PC-3 (cell line): ENCODE measurements at regions of chr1 and their contacts with region 1.

Region 1: DNA sequence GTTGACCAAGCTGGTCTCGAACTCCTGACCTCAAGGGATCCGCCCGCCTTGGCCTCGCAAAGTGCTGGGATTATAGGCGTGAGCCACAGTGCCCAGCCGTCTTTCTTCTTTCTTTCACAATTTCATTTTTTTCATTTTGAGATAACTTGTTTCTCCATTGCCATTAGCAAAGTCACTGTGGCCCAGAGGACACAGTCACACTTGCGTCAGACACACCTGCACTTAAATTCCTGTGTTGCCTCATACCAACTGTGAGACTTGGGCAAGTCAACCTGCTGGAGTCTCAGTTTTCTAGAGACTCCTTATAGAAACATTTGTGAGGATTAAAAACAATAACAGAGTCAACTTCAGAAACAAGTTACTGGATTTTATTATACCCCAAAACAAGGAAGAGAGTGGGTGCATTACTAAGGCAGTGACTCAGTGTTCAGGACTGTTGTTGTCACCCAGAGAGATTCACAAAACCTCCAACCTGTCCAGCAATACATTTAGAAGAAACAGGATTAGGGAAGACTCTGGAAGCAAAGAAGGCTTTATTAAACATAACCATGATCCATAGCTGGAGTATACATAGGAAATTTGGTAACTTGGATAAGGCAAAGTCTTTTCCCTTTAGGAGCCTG is 2.6 kb downstream of the TEDDM1 start:
- DNase-seq: peak; percentile 51
- ATAC-seq: peak; percentile 29; the same call in 1 of the 2 replicates
- H3K4me3 ChIP-seq: no peak overlapping the region
- H3K27ac ChIP-seq: peak overlapping the region; percentile 34
- H3K4me1 ChIP-seq: peaks cover 17% of the 10 kb centered on the region
- H3K27me3 ChIP-seq: no peaks in the 10 kb centered on the region
- CTCF ChIP-seq: no peak

Region 2: DNA sequence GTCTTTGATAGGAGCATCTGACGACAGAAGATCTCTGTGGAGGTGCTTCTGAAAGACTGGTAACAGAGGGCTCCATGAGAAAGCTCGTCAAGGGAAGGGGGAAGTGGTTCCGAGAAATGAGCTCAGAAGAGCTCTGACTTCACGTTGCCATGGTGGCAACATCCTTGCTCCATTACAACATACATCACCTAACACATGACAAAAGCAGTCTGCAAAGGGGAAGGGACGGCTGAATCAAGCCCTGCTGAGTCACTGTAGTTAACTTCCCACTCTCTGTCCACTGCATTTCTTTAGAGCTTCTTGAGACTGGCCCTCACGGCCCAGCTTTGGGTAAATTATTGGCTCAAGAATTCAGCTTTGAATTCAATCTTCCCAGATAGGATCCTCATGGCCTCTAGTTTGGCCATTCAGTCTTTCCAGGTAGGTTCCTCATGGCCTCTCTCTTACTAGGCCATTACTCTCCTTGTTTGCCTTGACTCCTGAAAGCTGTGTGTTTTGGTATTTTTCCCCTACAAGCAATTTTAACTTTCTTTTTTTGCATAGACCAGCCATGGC is 248.4 kb before region 1 on chr1:
- CTCF ChIA-PET with region 1: no interaction called
- POLR2A ChIA-PET with region 1: no interaction called
- intact Hi-C with region 1: no loop called
- DNase-seq: no peak
- ATAC-seq: peak; percentile 27; the same call in 1 of the 2 replicates
- H3K4me3 ChIP-seq: no peak overlapping the region
- H3K27ac ChIP-seq: no peak overlapping the region
- H3K4me1 ChIP-seq: peaks cover 5% of the 10 kb centered on the region; the same call in 1 of the 2 replicates
- H3K27me3 ChIP-seq: no peaks in the 10 kb centered on the region
- CTCF ChIP-seq: no peak

Region 3: GRCh38 chr1:182185813-182186756 is 211.8 kb before region 1 on chr1:
- CTCF ChIA-PET with region 1: no interaction called
- POLR2A ChIA-PET with region 1: no interaction called
- intact Hi-C with region 1: loop called (anchors 1 kb)
- DNase-seq: peak; percentile 92
- ATAC-seq: peak; percentile 87
- H3K4me3 ChIP-seq: peak overlapping the region; percentile 23; the same call in 1 of the 2 replicates
- H3K27ac ChIP-seq: peak overlapping the region; percentile 82
- H3K4me1 ChIP-seq: peaks cover 35% of the 10 kb centered on the region
- H3K27me3 ChIP-seq: no peaks in the 10 kb centered on the region
- CTCF ChIP-seq: no peak

Region 4: DNA sequence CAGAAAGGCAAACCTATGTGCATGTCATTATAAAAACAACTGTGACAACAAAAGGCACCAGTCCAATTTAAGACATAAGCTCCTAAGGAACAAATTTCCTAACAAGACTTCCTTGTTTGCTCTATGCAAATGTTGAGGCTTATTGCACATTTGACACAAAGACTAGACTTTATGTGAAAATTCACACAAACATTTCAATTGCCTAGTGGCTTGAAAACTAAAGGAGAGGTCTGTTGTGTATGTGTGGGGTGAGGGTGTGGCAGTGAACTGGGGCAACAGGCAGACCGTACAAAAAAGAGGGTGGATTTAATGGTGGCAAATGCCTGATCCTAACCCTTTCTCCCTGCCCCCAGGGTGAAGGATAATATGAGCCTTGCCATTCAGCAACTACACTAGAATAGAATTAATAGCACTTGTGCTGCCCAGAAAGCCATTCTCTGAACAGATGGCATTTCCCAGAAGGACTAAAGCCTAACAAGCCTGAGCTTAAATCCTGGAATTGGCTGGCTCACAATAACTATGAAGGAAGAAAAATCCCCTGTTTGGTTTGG is 80.2 kb before region 1 on chr1:
- CTCF ChIA-PET with region 1: no interaction called
- POLR2A ChIA-PET with region 1: no interaction called
- intact Hi-C with region 1: loop called (anchors 2 kb)
- DNase-seq: no peak
- ATAC-seq: no peak
- H3K4me3 ChIP-seq: no peak overlapping the region
- H3K27ac ChIP-seq: no peak overlapping the region
- H3K4me1 ChIP-seq: no peaks in the 10 kb centered on the region
- H3K27me3 ChIP-seq: no peaks in the 10 kb centered on the region
- CTCF ChIP-seq: no peak

Region 5: DNA sequence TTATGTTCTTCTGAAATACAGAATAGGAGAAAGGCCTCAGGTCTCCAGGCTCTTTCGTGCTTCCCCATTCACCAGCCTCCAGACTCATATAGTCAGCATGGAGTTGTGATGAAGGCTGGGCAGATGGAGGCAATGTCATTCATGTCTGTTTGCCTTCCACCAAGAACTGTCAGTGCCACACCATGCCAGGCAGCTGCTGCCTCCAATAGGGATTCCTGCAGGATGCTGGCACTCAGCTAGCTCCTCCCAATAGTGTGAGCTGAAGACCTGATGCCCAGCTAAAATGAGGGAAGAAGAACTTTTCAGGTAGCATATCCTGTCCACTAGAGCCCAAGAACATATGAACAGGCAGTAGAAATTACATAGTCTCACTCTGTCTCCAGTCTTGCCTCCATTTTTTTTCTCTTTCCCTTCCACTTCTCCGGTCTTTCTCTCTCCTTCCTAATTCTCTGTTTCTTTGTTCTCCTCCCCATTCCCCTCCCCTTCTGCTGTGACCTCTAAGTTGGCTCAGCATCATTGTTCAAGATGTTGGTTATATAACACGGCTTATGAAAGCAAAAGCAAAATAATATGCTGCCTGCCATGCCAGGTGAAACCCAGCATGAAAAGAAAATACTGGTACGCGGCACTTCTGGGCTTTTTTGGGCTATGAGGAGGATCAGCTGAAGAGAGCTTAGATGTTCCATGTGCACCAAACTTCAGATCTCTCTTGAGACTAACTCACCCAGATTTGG is 23.6 kb before region 1 on chr1:
- CTCF ChIA-PET with region 1: no interaction called
- POLR2A ChIA-PET with region 1: no interaction called
- intact Hi-C with region 1: no loop called
- DNase-seq: no peak
- ATAC-seq: no peak
- H3K4me3 ChIP-seq: no peak overlapping the region
- H3K27ac ChIP-seq: no peak overlapping the region
- H3K4me1 ChIP-seq: peaks cover 17% of the 10 kb centered on the region
- H3K27me3 ChIP-seq: no peaks in the 10 kb centered on the region
- CTCF ChIP-seq: no peak

Region 6: DNA sequence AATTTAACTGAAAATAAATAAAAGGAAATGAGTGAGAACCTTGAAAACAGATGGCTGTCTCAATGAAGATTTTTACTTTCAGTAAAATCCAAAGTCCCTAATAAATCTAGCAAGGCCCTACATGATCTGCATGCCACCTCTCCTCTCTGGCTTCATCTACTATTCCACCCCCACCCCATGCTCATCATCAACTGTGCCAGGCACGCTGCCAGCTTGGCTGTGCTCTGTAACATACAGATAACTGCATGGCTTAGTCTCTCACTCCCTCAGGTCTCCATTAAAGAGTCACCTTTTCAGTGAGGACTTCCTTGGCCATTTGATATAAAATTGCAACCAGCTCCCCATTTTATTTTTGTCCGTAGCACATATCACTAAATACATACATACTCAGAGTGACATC is 78.7 kb after region 1 on chr1:
- CTCF ChIA-PET with region 1: no interaction called
- POLR2A ChIA-PET with region 1: no interaction called
- intact Hi-C with region 1: no loop called
- DNase-seq: no peak
- ATAC-seq: no peak
- H3K4me3 ChIP-seq: no peak overlapping the region
- H3K27ac ChIP-seq: no peak overlapping the region
- H3K4me1 ChIP-seq: no peaks in the 10 kb centered on the region
- H3K27me3 ChIP-seq: peaks cover 44% of the 10 kb centered on the region
- CTCF ChIP-seq: no peak